Activated CD4-positive, alpha-beta T cell treated with anti-CD3 and anti-CD28 coated beads for 36 hours (primary cell): ENCODE measurements at regions of chr14 and their contacts with region 1.

Region 1: DNA sequence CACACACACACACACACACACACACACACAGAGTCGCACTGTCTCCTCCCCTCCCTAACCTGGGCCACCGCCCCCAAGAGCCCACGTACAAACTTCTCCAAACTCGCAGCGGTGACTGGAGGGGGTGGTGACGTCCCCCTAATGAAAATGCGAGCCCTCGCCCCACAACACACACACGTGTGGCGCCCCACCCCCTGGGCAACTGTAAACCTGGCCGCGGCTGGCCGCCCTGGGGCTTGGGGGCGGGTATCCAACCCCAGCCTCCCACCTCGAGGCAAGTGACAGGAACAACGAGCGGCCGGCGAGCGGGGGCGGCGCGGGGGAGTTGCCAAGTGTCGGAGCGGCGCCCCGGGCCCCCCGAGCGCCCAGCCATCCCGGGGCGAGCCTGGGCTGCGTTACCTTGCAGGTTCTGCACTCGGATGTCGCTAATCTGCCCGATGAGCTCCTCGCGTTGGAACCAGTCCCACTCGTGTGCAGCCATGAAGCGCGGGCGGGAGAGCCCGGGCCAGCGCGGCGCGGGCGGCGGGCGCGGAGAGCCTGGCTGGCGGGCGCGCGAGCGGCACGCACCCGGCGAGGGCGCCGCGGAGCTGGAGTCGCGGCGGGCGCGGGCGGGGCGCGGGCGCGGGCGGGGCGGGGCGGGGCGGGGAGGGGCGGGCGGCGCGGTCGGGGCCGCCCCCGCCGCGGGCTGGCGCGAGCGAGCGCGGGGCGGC is at the start of gene CLMN:
- DNase-seq: peak; percentile 48
- ATAC-seq: peak; percentile 65
- H3K4me3 Mint-ChIP-seq: peak within 1 kb of the TSS; percentile 64
- H3K27ac Mint-ChIP-seq: peak within 1 kb of the TSS; percentile 29
- H3K4me1 Mint-ChIP-seq: peaks cover 14% of the 10 kb centered on the region
- H3K27me3 Mint-ChIP-seq: peaks cover 42% of the 10 kb centered on the region
- total RNA-seq, gene CLMN: 0.75 to 1.5 TPM

Region 2: GRCh38 chr14:95265106-95266094 is 54.1 kb before region 1 on chr14:
- CTCF ChIA-PET with region 1: no interaction called
- POLR2A ChIA-PET with region 1: no interaction called
- intact Hi-C with region 1: loop called (anchors 1 to 2 kb)
- DNase-seq: peak; percentile 66
- ATAC-seq: peak; percentile 83
- H3K4me3 Mint-ChIP-seq: no peak overlapping the region
- H3K27ac Mint-ChIP-seq: peak overlapping the region; percentile 35
- H3K4me1 Mint-ChIP-seq: peaks cover 39% of the 10 kb centered on the region
- H3K27me3 Mint-ChIP-seq: no peaks in the 10 kb centered on the region

Region 3: DNA sequence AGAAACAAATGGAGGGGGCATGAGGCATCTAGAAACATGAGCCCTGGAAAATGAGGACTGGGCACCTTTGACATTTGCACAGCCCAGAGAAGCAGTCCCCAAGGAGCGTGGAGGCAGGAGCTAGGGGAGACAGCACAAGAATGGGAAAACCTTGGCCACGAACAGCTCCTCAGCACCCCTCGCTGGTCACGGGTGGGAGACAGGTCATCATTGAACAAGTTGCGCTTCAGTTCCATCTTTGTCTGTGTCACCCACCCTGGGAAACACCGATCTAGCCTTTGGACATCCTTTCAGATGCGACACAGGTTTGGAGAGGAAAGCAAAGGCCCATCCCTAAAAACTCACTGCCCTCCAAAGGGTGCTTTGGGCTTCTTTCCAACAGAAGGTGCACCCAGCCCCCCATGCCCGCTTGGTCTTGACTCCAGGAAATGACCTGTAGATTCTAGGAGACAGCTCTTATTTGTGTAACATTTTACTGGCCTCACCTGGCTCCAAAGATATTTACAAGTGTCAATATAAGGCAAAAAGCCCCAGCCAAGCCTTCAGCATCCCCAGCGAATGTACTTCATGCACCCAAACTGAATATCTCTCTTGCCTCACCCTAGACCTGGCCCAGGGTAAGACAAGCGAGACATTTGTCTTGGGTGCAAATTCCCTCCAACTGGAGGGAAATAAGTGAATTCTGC is 29.1 kb after region 1 on chr14:
- CTCF ChIA-PET with region 1: no interaction called
- POLR2A ChIA-PET with region 1: no interaction called
- intact Hi-C with region 1: loop called in 1 of 2 experiments (anchors 1 kb)
- DNase-seq: no peak
- ATAC-seq: no peak
- H3K4me3 Mint-ChIP-seq: no peak overlapping the region
- H3K27ac Mint-ChIP-seq: no peak overlapping the region
- H3K4me1 Mint-ChIP-seq: no peaks in the 10 kb centered on the region
- H3K27me3 Mint-ChIP-seq: peaks cover 16% of the 10 kb centered on the region